ENCODE measurements at regions of chr1 and their contacts with region 1.

Region 1: DNA sequence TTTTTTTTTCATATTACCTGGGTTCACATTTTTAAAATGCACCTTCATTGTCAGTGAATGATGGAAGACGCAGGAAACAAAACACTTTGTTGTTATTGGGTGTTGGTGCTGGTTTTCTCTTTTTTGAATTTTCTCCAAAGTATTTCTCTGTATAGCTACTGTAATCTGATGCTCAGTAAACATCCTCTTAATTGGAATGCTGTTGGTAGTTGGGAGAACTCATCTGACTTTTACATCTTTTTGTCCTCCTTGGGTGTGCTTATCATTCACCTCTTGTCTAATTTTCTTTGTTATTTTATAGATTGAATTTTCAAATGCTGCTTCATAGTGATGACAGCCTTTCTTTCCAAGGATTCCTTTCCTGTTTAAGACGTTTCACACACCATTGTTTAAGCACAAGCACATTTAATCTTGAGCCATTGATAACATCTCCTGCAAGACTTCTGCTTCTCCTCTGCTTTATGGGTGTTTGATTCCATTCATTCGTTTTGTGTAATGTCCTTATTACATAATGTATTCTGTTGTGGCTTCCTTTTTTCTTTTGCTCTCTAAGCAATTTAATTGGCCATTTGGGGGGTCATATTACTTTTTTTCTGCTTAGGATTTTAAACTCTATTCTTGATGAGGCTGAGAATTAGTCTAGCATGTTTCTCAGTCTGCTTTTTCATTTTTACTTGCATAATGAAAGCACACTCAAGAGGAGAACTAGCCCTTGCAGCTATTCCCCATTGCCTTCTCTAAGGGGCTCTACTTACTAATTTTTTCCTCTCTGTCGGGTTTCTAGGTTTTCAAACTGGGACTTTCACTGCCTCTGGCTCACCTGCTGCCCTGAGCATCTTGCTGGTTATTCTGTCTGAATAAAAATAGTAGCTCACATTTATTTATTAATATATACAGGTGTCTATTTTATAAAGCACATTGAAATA is 42.0 kb upstream of the CD34 start:
- DNase-seq: no peak
- ATAC-seq: peak; percentile 53
- H3K4me3 ChIP-seq: no peak overlapping the region
- H3K27ac ChIP-seq: no peak overlapping the region
- H3K4me1 ChIP-seq: no peaks in the 10 kb centered on the region
- H3K27me3 ChIP-seq: peaks cover 5 to 9% of the 10 kb centered on the region in 2 experiments
- CTCF ChIP-seq: no peak
- EP300 ChIP-seq: no peak
- POLR2A ChIP-seq: no peak
- RAD21 ChIP-seq: no peak

Region 2: DNA sequence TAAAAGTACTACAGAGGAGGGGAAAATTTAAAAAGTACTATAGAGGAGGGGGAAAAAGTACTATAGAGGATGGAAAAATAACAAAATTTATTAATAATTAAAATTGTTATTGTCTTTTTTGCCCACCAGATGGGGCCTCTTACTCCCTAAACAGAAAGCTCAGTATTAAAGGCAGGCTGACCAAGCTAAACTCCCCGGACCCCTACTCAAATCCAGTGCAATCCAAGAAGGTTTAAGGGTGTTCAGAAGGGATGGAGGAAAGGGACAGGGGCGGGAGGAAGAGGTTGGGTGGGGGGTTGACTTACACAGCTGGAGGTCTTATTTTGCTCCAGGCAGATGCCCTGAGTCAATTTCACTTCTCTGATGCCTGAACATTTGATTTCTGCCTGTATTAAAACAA is 55.7 kb before region 1 on chr1:
- CTCF ChIA-PET with region 1: interaction called, 5 read pairs
- POLR2A ChIA-PET with region 1: no interaction called
- RAD21 ChIA-PET with region 1: interaction called, 4 read pairs
- SMC1A ChIA-PET with region 1: interaction called, 11 read pairs
- in situ Hi-C with region 1: no loop called
- intact Hi-C with region 1: no loop called
- DNase-seq: no peak
- ATAC-seq: peak; percentile 43
- H3K4me3 ChIP-seq: no peak overlapping the region
- H3K27ac ChIP-seq: no peak overlapping the region
- H3K4me1 ChIP-seq: no peaks in the 10 kb centered on the region; the same call in 1 of the 2 replicates
- H3K27me3 ChIP-seq: peaks cover 0 to 2% of the 10 kb centered on the region in 2 experiments; a peak in 1 of 4 replicates
- CTCF ChIP-seq: peak in 2 of 3 experiments; percentile 29 to 39; a peak in 4 of 6 replicates
- EP300 ChIP-seq: no peak
- POLR2A ChIP-seq: no peak
- RAD21 ChIP-seq: peak; percentile 53

Region 3: GRCh38 chr1:207941665-207942064 is 11.2 kb before region 1 on chr1:
- CTCF ChIA-PET with region 1: interaction called, 6 read pairs
- POLR2A ChIA-PET with region 1: interaction called, 3 read pairs
- RAD21 ChIA-PET with region 1: interaction called, 5 read pairs
- SMC1A ChIA-PET with region 1: interaction called, 10 read pairs
- in situ Hi-C with region 1: no loop called
- intact Hi-C with region 1: no loop called
- DNase-seq: no peak
- ATAC-seq: no peak
- H3K4me3 ChIP-seq: no peak overlapping the region
- H3K27ac ChIP-seq: no peak overlapping the region
- H3K4me1 ChIP-seq: no peaks in the 10 kb centered on the region
- H3K27me3 ChIP-seq: no peaks in the 10 kb centered on the region
- CTCF ChIP-seq: no peak
- EP300 ChIP-seq: no peak
- POLR2A ChIP-seq: no peak
- RAD21 ChIP-seq: no peak